Mammary epithelial cell (primary cell): ENCODE measurements at regions of chr7 and their contacts with region 1.

Region 1: GRCh38 chr7:31744294-31744874 is 57.4 kb downstream of the PPP1R17 start:
- DNase-seq: peak; percentile 64
- H3K4me3 ChIP-seq: no peak overlapping the region
- H3K27ac ChIP-seq: no peak overlapping the region
- H3K4me1 ChIP-seq: peaks cover 9% of the 10 kb centered on the region
- H3K27me3 ChIP-seq: no peaks in the 10 kb centered on the region
- CTCF ChIP-seq: peak; percentile 87 to 94

Region 2: DNA sequence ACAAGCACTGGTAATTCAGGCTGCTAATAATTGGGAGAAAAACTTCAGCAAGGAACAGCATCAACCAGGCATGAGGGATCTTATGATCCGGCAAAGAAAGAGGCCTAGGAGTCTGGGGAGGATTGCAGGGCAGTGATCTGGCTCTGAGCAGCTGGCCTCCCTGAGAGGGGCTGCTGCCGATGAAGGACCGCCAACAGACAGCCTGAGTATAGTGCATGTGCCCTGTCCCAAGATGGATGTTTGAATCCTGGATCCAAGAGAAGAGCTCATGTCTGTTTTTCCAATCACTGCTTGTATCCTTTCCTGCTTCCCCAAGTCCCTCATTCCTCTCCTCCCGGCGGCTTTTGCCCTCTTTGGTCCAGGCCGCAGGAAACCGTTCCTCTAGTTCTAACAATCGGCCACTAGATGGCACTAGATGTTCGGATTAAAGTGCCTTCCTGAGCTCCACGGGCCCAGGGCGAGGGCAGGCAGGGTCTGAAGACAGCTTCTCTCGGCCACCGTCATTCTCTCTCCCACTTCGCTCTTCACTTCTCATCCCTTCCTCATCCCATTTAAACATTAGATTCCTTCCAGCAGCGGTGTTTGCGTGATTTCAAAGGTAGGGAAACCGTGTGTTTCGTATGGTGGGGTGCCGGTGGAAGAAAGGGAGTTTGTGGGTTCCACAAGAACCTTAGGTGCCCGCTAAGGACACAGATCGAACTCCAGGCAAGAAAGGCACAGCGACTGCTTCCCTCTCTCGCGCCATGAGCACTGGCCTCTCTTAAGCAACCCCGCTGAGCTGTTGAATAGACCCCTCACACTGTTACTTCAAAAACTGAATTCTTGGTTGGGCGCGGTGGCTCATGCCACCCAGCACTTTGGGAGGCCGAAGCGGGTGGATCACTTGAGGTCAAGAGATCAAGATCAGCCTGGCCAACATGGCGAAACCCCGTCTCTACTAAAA is 609.9 kb before region 1 on chr7:
- CTCF ChIA-PET with region 1: no interaction called
- dilution Hi-C with region 1: loop called (anchors 25 kb)
- in situ Hi-C with region 1: loop called in 1 of 2 experiments (anchors 10 kb)
- intact Hi-C with region 1: no loop called
- DNase-seq: peak; percentile 52
- H3K4me3 ChIP-seq: no peak overlapping the region
- H3K27ac ChIP-seq: no peak overlapping the region
- H3K4me1 ChIP-seq: no peaks in the 10 kb centered on the region
- H3K27me3 ChIP-seq: no peaks in the 10 kb centered on the region
- CTCF ChIP-seq: peak; percentile 68

Region 3: GRCh38 chr7:31160941-31161340 is 583.4 kb before region 1 on chr7:
- CTCF ChIA-PET with region 1: no interaction called
- dilution Hi-C with region 1: no loop called
- in situ Hi-C with region 1: no loop called
- intact Hi-C with region 1: no loop called
- DNase-seq: no peak
- H3K4me3 ChIP-seq: no peak overlapping the region
- H3K27ac ChIP-seq: no peak overlapping the region
- H3K4me1 ChIP-seq: no peaks in the 10 kb centered on the region
- H3K27me3 ChIP-seq: no peaks in the 10 kb centered on the region
- CTCF ChIP-seq: no peak

Region 4: GRCh38 chr7:31883761-31884164 is 139.4 kb after region 1 on chr7:
- CTCF ChIA-PET with region 1: no interaction called
- dilution Hi-C with region 1: no loop called
- in situ Hi-C with region 1: no loop called
- intact Hi-C with region 1: loop called (anchors 2 kb)
- DNase-seq: peak; percentile 91
- H3K4me3 ChIP-seq: peak overlapping the region in 1 of 3 experiments; percentile 4
- H3K27ac ChIP-seq: peak overlapping the region; percentile 81
- H3K4me1 ChIP-seq: peaks cover 27% of the 10 kb centered on the region
- H3K27me3 ChIP-seq: no peaks in the 10 kb centered on the region
- CTCF ChIP-seq: no peak

Region 5: GRCh38 chr7:32062150-32062549 is 317.8 kb after region 1 on chr7:
- CTCF ChIA-PET with region 1: interaction called, 4 read pairs
- dilution Hi-C with region 1: no loop called
- in situ Hi-C with region 1: no loop called
- intact Hi-C with region 1: loop called (anchors 1 kb)
- DNase-seq: peak; percentile 64
- H3K4me3 ChIP-seq: peak overlapping the region in 2 of 3 experiments; percentile 21 to 26
- H3K27ac ChIP-seq: no peak overlapping the region
- H3K4me1 ChIP-seq: peaks cover 26% of the 10 kb centered on the region
- H3K27me3 ChIP-seq: no peaks in the 10 kb centered on the region
- CTCF ChIP-seq: peak; percentile 73 to 79

Region 6: DNA sequence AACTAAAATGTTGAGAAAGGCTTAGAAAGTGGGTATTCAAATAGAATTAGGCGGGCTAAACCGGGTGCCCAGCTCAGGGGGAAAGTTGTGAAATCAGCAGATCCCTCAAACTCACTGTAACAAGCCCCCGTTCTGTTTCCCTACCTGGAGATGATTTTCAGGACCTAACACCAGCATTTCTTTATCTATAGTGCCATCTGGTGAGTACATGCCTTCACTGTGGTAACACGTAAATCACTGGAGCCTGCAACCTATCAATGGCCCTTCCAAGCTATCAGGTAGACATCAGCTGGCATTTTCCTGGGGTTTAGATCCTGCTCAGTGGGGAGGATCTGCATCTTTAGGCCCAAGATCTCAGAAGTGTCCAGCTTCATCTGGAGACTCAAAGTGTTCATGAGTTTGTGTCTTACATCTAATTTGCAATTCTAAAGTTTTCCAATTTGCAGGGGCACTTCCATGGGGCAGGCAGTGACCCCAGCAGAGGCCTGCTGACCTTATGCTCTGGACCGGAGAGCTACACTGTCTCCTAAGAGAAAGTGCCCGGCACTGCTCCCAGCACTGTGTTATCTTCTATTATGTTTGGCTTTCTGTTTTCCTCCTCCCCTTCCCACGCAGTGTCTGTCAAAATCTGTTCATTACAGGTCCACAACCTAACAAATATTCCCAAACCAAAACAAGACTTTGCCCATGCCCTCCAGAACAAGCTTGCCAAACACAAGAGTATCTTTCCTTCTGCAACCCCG is 613.3 kb after region 1 on chr7:
- CTCF ChIA-PET with region 1: no interaction called
- dilution Hi-C with region 1: no loop called
- in situ Hi-C with region 1: loop called in 1 of 2 experiments (anchors 10 kb)
- intact Hi-C with region 1: loop called (anchors 2 kb)
- DNase-seq: peak; percentile 22
- H3K4me3 ChIP-seq: no peak overlapping the region
- H3K27ac ChIP-seq: no peak overlapping the region
- H3K4me1 ChIP-seq: no peaks in the 10 kb centered on the region
- H3K27me3 ChIP-seq: peaks cover 3% of the 10 kb centered on the region
- CTCF ChIP-seq: peak; percentile 51 to 66

Region 7: DNA sequence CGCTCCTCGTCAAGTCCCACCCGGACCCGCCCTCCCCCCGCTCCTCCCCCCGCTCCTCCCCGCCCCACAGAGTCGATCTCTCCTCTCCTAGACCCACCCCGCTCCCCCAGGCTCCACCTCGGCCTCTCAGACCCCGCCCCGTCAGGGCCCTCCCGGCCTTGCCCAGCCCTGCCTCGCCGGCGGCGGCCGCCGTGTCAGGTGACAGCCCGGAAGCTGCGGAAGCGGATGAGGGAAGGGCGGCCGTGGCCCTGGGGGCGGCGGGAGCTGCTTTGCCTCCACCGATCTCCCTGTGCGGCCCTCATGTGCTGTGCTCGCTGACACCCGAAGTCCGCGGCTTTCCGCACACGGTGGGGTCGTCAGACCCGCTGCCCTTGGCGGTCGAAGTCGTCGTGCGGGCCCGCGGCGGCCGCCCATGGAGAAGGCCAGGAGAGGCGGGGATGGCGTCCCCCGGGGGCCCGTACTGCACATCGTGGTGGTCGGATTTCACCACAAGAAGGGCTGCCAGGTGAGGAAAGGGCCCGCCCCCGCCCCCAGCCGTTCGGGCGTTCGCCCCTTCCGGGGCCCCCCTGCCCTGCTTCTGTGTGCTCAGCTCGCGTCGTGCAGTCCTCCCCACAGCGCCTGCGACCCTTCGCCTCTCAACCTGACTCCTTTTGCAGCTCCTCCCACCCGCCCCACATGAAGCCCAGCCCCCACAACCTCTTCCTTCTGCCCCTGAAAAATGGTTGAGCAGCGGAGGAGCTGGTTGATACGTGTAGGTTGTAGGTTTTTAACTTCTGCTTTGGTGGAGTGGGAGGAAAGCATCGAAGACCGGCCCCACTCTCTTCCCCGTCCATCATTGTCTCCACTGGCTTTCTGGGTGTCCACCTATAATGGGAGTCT is 751.2 kb after region 1 on chr7 and contains the start of gene AVL9:
- CTCF ChIA-PET with region 1: no interaction called
- dilution Hi-C with region 1: no loop called
- in situ Hi-C with region 1: loop called in 1 of 2 experiments (anchors 25 kb)
- intact Hi-C with region 1: no loop called
- DNase-seq: peak; percentile 94
- H3K4me3 ChIP-seq: peak within 1 kb of the TSS; percentile 79 to 92 (median 82)
- H3K27ac ChIP-seq: peak within 1 kb of the TSS; percentile 83
- H3K4me1 ChIP-seq: peaks cover 9% of the 10 kb centered on the region
- H3K27me3 ChIP-seq: no peaks in the 10 kb centered on the region
- CTCF ChIP-seq: no peak
- total RNA-seq, gene AVL9: 30.2 to 31.3 TPM